ENCODE measurements at regions of chr5 and their contacts with region 1.

Region 1: GRCh38 chr5:164048359-164048926 is 543.0 kb downstream of the MAT2B start:
- DNase-seq: no peak
- H3K4me3 Mint-ChIP-seq: no peak overlapping the region
- H3K27ac Mint-ChIP-seq: no peak overlapping the region
- H3K4me1 Mint-ChIP-seq: no peaks in the 10 kb centered on the region
- H3K27me3 Mint-ChIP-seq: no peaks in the 10 kb centered on the region
- CTCF ChIP-seq: no peak

Region 2: DNA sequence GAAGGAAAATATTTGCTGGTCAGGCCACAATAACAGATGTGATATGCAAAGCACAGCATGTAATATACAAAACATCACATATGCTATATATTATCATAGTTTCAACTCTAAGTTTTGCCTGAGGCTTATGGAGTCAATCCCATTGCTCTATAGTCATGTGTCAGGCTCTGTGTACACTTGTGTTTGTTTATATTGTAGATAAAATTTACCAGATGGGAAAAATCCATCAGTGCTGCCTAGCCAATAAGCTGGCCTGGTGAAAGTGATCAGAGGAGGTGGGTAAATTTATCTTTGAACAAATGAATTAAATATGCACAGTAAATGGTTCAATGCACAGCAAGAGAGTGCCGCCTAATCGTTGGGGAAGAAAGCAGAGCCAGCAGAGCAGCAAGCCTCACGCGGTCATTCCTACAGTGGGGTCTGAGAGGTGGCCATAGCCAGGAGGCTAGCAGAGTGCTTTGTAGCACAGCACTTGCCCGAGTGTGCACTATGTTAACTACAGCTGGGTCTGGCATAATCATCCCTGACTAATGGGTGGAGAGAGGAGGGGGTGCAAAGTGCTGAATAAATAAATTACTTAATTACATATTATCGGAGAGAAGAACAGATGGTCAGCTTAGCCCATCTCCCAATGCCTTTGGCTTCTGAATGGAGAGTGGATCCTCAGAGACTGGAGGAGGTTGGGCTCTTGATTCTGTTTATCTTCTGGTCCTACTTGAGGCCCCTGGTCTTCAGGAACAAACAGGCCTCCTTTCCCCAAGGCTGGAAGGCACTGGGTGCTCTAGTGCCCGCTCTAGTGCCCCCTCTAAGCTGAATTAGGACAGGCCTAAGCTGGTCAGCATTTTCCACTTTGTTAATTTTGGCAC is 389.5 kb before region 1 on chr5:
- CTCF ChIA-PET with region 1: no interaction called
- intact Hi-C with region 1: no loop called
- DNase-seq: no peak
- H3K4me3 Mint-ChIP-seq: no peak overlapping the region
- H3K27ac Mint-ChIP-seq: no peak overlapping the region
- H3K4me1 Mint-ChIP-seq: no peaks in the 10 kb centered on the region
- H3K27me3 Mint-ChIP-seq: no peaks in the 10 kb centered on the region
- CTCF ChIP-seq: no peak

Region 3: GRCh38 chr5:164097747-164098146 is 49.3 kb after region 1 on chr5:
- CTCF ChIA-PET with region 1: no interaction called
- intact Hi-C with region 1: no loop called
- DNase-seq: no peak
- H3K4me3 Mint-ChIP-seq: no peak overlapping the region
- H3K27ac Mint-ChIP-seq: peak overlapping the region; percentile 63
- H3K4me1 Mint-ChIP-seq: peaks cover 19% of the 10 kb centered on the region
- H3K27me3 Mint-ChIP-seq: no peaks in the 10 kb centered on the region
- CTCF ChIP-seq: no peak

Region 4: GRCh38 chr5:164235300-164235891 is 187.0 kb after region 1 on chr5:
- CTCF ChIA-PET with region 1: no interaction called
- intact Hi-C with region 1: no loop called
- DNase-seq: peak; percentile 48
- H3K4me3 Mint-ChIP-seq: no peak overlapping the region
- H3K27ac Mint-ChIP-seq: peak overlapping the region; percentile 48
- H3K4me1 Mint-ChIP-seq: peaks cover 35% of the 10 kb centered on the region
- H3K27me3 Mint-ChIP-seq: no peaks in the 10 kb centered on the region
- CTCF ChIP-seq: no peak

Region 5: DNA sequence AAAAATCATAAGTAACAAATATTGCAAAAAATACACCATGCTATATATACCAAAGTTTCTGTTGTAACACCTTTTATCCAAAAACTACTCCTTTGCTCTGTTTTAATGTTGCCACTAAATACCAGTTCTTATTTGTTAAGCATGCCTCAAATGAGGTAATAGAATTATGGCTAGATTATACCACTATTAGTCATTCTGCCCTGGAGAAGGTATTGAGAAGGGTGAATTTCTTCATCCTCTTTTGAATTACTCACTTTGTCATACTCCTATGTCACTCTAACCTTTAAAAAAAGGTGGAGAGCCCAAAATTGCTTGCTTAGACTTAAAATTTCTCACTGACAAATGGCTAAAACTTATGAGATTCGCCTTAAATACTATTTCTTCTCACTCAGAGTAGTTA is 207.9 kb after region 1 on chr5:
- CTCF ChIA-PET with region 1: no interaction called
- intact Hi-C with region 1: loop called (anchors 1 kb)
- DNase-seq: no peak
- H3K4me3 Mint-ChIP-seq: no peak overlapping the region
- H3K27ac Mint-ChIP-seq: no peak overlapping the region
- H3K4me1 Mint-ChIP-seq: peaks cover 12% of the 10 kb centered on the region
- H3K27me3 Mint-ChIP-seq: no peaks in the 10 kb centered on the region
- CTCF ChIP-seq: no peak

Region 6: GRCh38 chr5:164277720-164278119 is 229.3 kb after region 1 on chr5:
- CTCF ChIA-PET with region 1: no interaction called
- intact Hi-C with region 1: loop called (anchors 5 kb)
- DNase-seq: no peak
- H3K4me3 Mint-ChIP-seq: no peak overlapping the region
- H3K27ac Mint-ChIP-seq: no peak overlapping the region
- H3K4me1 Mint-ChIP-seq: peaks cover 9% of the 10 kb centered on the region
- H3K27me3 Mint-ChIP-seq: no peaks in the 10 kb centered on the region
- CTCF ChIP-seq: no peak

Region 7: GRCh38 chr5:164422400-164422799 is 374.0 kb after region 1 on chr5:
- CTCF ChIA-PET with region 1: no interaction called
- intact Hi-C with region 1: loop called (anchors 1 kb)
- DNase-seq: peak; percentile 17
- H3K4me3 Mint-ChIP-seq: no peak overlapping the region
- H3K27ac Mint-ChIP-seq: no peak overlapping the region
- H3K4me1 Mint-ChIP-seq: no peaks in the 10 kb centered on the region
- H3K27me3 Mint-ChIP-seq: no peaks in the 10 kb centered on the region
- CTCF ChIP-seq: no peak

Region 8: GRCh38 chr5:164475339-164475977 is 427.0 kb after region 1 on chr5:
- CTCF ChIA-PET with region 1: no interaction called
- intact Hi-C with region 1: loop called (anchors 1 kb)
- DNase-seq: peak; percentile 34
- H3K4me3 Mint-ChIP-seq: no peak overlapping the region
- H3K27ac Mint-ChIP-seq: no peak overlapping the region
- H3K4me1 Mint-ChIP-seq: no peaks in the 10 kb centered on the region
- H3K27me3 Mint-ChIP-seq: no peaks in the 10 kb centered on the region
- CTCF ChIP-seq: peak; percentile 58

Region 9: DNA sequence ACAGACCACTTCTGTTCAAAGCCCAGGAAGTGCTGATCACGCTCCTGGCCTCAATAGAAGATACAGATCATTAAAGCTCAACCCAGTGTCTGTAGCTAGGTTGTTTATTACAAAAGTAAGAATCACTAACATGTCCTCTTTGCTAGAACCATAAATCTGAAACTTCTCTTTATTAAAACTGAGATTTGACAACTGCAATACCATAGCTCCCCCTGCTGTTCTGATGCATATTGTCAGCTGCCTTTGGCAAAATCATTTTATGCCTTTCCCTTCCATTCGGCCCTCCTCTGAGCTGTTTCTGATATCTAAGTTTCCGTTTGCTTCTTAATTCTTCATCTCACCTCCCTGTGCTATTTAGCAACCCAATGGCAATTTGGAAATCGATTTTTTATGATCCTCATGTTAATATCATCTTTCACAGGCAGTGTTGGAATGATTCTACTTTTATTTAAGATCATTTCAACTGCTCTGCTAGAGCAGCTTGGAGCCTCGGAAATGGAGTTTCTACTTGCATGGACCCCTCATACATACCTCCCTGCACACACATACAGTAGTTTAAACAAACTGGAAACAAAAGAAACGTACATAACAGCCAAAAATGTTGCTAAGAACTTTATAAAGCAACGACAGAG is 455.8 kb after region 1 on chr5:
- CTCF ChIA-PET with region 1: no interaction called
- intact Hi-C with region 1: loop called (anchors 1 kb)
- DNase-seq: peak; percentile 68
- H3K4me3 Mint-ChIP-seq: peak overlapping the region; percentile 3
- H3K27ac Mint-ChIP-seq: no peak overlapping the region
- H3K4me1 Mint-ChIP-seq: peaks cover 9% of the 10 kb centered on the region
- H3K27me3 Mint-ChIP-seq: no peaks in the 10 kb centered on the region
- CTCF ChIP-seq: peak; percentile 77